ENCODE measurements at regions of chr19 and their contacts with region 1.

Region 1: GRCh38 chr19:8355631-8356402 is 8.1 kb upstream of the ANGPTL4 start:
- DNase-seq: no peak
- ATAC-seq: no peak

Region 2: GRCh38 chr19:8252922-8253589 is 102.8 kb before region 1 on chr19:
- intact Hi-C with region 1: no loop called
- DNase-seq: peak; percentile 90
- ATAC-seq: peak; percentile 56

Region 3: GRCh38 chr19:8396563-8397203 is 40.9 kb after region 1 on chr19:
- intact Hi-C with region 1: loop called (anchors 2 kb)
- DNase-seq: peak; percentile 82
- ATAC-seq: peak; percentile 47

Region 4: GRCh38 chr19:8473648-8474476 is 118.0 kb after region 1 on chr19:
- intact Hi-C with region 1: no loop called
- DNase-seq: no peak
- ATAC-seq: no peak

Region 5: DNA sequence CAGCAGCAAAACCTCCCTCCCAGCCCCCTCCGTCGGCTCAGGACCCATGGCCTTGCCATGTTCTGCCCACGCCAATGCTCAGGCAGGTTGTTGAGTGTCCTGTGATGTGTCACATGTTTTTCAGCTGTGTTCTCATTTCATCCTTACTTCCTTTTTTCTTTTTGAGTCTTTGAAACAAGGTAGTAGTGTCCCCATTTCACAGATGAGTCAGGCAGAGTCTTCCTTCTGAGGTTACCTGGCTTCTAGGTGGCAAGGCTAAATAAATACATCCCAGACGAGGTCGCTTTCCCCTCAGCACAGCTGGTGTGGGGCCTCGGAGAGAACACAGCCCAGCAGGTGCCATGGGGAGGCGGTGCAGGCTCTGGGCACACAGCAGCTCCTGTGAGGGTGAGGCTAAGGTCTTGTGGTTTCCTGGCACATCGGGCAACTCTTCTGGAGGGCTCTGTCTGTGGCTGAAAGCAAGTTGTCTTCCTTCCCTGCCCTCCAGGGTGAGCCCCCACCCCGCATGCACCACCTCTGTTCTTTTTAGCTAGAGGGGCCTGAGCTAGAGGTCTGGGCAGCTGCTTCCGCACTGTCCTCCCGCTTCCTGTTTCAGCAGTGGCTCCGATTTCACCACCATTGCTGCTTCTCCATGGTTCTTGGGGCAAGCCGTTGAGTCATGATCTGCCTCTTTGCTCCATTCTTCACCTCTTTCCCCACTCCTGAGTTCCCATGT is 131.5 kb after region 1 on chr19:
- intact Hi-C with region 1: no loop called
- DNase-seq: peak; percentile 78
- ATAC-seq: peak; percentile 27

Region 6: GRCh38 chr19:8505680-8506401 is 150.0 kb after region 1 on chr19:
- intact Hi-C with region 1: loop called (anchors 2 kb)
- DNase-seq: peak; percentile 93
- ATAC-seq: peak; percentile 86

Measured in Right ventricle myocardium inferior (tissue), 1 donor.